ENCODE measurements at regions of chr15 and their contacts with region 1.

Region 1: DNA sequence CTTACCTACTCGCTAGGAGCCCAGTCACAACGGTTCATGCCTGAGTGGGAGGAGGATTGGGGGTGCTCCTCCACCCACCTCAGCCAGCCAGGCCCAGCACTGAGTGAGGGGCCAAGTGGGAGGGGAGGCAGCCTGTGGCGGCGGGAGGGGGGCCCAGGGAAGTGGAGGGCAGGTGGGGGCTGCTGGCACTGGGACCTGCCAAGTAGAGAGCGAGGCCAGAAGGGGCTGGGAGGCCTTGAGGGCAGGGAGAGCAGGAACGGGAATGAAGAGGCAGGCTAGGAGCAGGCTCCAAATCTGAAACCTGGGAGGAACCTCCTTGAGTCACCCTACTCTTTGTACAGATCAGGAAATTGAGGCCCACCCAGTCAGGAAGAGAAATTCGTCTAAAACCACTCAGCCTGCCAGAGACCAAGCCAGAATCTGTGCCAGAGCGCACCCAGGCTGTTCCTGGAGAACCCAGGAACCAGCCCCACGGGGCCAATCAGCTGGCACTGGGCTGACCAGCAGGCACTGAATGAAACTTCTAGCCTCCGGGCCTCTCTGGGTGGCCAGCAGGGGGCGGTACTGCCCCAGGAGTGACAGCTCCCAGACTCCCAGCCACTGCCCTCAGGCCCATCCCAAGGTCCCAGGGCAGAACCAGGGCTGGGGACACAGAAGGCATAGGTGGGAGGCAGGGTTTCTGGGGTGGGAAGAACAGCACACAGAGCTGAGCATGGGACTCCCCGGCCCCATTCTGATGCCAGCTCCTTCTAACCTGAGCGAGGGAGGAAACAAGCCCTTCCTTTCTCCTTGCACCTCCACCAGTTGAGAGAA is 14.8 kb upstream of the CYP11A1 start:
- DNase-seq: peak; percentile 95
- ATAC-seq: peak; percentile 93
- H3K4me3 Mint-ChIP-seq: no peak overlapping the region
- H3K27ac Mint-ChIP-seq: no peak overlapping the region
- H3K4me1 Mint-ChIP-seq: peaks cover 12% of the 10 kb centered on the region
- H3K27me3 Mint-ChIP-seq: no peaks in the 10 kb centered on the region; the same call in 1 of the 2 replicates
- CTCF ChIP-seq: peak; percentile 95

Region 2: GRCh38 chr15:74402873-74403587 is 20.8 kb after region 1 on chr15:
- CTCF ChIA-PET with region 1: interaction called, 11 read pairs
- POLR2A ChIA-PET with region 1: no interaction called
- DNase-seq: no peak
- ATAC-seq: no peak
- H3K4me3 Mint-ChIP-seq: no peak overlapping the region
- H3K27ac Mint-ChIP-seq: no peak overlapping the region
- H3K4me1 Mint-ChIP-seq: peaks cover 11% of the 10 kb centered on the region
- H3K27me3 Mint-ChIP-seq: no peaks in the 10 kb centered on the region; the same call in 1 of the 2 replicates
- CTCF ChIP-seq: no peak

Region 3: GRCh38 chr15:74422650-74423430 is 40.6 kb after region 1 on chr15:
- CTCF ChIA-PET with region 1: interaction called, 29 read pairs
- POLR2A ChIA-PET with region 1: no interaction called
- DNase-seq: peak; percentile 37
- ATAC-seq: peak; percentile 54
- H3K4me3 Mint-ChIP-seq: no peak overlapping the region
- H3K27ac Mint-ChIP-seq: peak overlapping the region; percentile 71; the same call in 1 of the 2 replicates
- H3K4me1 Mint-ChIP-seq: peaks cover 37% of the 10 kb centered on the region
- H3K27me3 Mint-ChIP-seq: no peaks in the 10 kb centered on the region
- CTCF ChIP-seq: no peak

Region 4: GRCh38 chr15:74438721-74439316 is 56.6 kb after region 1 on chr15:
- CTCF ChIA-PET with region 1: interaction called, 136 read pairs
- POLR2A ChIA-PET with region 1: interaction called, 7 read pairs
- DNase-seq: peak; percentile 78
- ATAC-seq: peak; percentile 70
- H3K4me3 Mint-ChIP-seq: no peak overlapping the region
- H3K27ac Mint-ChIP-seq: no peak overlapping the region
- H3K4me1 Mint-ChIP-seq: peaks cover 31% of the 10 kb centered on the region
- H3K27me3 Mint-ChIP-seq: peaks cover 20% of the 10 kb centered on the region
- CTCF ChIP-seq: peak; percentile 72

Region 5: GRCh38 chr15:74482661-74483060 is 100.5 kb after region 1 on chr15:
- CTCF ChIA-PET with region 1: interaction called, 21 read pairs
- POLR2A ChIA-PET with region 1: no interaction called
- DNase-seq: peak; percentile 26
- ATAC-seq: peak; percentile 100
- H3K4me3 Mint-ChIP-seq: no peak overlapping the region
- H3K27ac Mint-ChIP-seq: peak overlapping the region; percentile 83
- H3K4me1 Mint-ChIP-seq: peaks cover 11% of the 10 kb centered on the region
- H3K27me3 Mint-ChIP-seq: no peaks in the 10 kb centered on the region
- CTCF ChIP-seq: no peak